Body of pancreas (tissue), 4 donors: ENCODE measurements at regions of chr12 and their contacts with region 1.

Region 1: DNA sequence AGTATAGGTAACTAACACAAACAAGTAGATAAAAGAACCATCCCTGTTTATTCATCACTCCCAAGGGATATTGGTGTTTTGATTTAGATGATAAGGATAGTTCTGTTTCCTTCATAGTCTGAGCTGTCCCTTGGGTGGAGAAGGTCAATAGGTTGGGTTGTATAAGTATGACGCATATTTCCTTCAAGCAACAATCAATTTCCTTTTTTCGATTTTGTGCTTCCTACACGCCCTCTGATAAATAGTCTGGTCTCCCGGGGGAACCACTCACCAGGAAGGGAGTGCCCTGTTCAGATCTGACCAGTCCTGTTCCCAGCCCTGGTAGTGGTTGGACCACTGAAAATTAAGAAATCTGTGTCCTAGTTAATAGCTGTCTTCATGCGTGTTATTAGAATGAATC is 378.7 kb upstream of the FAR2 start:
- DNase-seq: no peak
- ATAC-seq: no peak
- H3K4me3 ChIP-seq: no peak overlapping the region
- H3K27ac ChIP-seq: no peak overlapping the region
- H3K4me1 ChIP-seq: no peaks in the 10 kb centered on the region
- H3K27me3 ChIP-seq: no peaks in the 10 kb centered on the region
- CTCF ChIP-seq: no peak
- POLR2A ChIP-seq: no peak

Region 2: DNA sequence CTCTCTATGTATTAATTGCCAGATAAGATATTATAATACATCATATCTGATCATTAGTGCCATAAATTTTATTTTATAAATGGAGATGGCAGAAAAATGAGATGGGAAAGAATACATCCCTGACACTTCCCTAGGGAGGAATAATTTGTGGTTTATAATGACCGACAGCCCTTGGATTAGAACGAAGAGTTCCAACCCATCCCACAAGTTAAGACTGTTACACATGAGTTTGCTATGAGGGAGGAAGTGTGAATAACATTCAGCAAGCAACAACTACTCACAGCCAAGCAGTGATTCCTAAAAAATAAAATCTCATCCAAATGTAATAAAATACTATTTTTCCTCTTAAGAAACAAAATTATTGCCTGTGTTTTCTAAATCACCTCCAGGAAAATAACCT is 281.1 kb before region 1 on chr12:
- intact Hi-C with region 1: no loop called
- DNase-seq: no peak
- ATAC-seq: no peak
- H3K4me3 ChIP-seq: no peak overlapping the region
- H3K27ac ChIP-seq: no peak overlapping the region
- H3K4me1 ChIP-seq: no peaks in the 10 kb centered on the region
- H3K27me3 ChIP-seq: no peaks in the 10 kb centered on the region
- CTCF ChIP-seq: no peak
- POLR2A ChIP-seq: no peak

Region 3: DNA sequence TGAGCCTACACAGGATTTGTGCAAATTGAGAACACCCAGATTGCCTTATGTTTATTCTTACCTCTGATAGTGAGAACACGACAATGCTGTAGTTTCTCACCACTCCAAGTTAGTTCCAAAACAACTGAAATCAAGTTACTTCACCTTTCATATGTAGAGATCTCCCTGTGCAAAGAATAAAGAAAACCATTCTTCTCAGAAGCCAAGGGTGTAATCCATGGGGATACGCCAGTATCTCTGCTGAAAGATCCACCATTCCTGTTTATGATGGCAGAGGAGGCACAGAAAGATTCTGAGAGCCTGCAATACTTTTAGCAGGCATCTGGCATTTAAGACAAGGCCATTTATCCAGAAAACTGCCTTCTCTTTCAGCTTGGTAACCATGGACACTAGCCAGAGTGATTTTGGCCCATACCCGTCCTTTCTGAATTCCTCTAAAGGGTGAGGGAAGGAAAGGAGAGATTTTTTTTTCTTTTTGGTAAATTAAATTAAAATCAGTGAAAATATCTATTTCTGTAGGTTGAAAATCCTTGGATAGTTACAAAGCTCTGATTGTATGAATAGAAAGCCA is 23.3 kb after region 1 on chr12:
- intact Hi-C with region 1: loop called (anchors 2 kb)
- DNase-seq: no peak
- ATAC-seq: no peak
- H3K4me3 ChIP-seq: no peak overlapping the region
- H3K27ac ChIP-seq: no peak overlapping the region
- H3K4me1 ChIP-seq: no peaks in the 10 kb centered on the region
- H3K27me3 ChIP-seq: no peaks in the 10 kb centered on the region
- CTCF ChIP-seq: no peak
- POLR2A ChIP-seq: no peak

Region 4: GRCh38 chr12:28830491-28830890 is 60.2 kb after region 1 on chr12:
- intact Hi-C with region 1: no loop called
- DNase-seq: no peak
- ATAC-seq: no peak
- H3K4me3 ChIP-seq: no peak overlapping the region
- H3K27ac ChIP-seq: no peak overlapping the region
- H3K4me1 ChIP-seq: no peaks in the 10 kb centered on the region
- H3K27me3 ChIP-seq: no peaks in the 10 kb centered on the region
- CTCF ChIP-seq: no peak
- POLR2A ChIP-seq: no peak

Region 5: DNA sequence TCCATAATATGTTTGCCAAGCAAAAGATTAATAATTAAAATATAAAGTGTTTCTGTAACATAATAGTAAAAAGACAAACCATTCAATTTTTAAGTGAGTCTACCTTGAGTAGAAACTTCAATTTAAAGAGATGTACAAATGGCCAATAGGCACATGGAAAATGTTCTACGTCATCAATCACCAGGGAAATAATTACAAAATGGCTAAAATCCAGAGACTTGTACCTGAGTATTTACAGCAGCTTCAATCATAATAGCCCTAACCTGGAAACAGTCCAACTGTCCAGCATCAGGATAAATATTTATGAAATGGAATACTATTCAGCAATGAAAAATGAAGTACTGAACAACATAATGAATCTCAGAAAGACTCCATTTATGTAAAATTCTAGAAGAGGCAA is 283.2 kb after region 1 on chr12:
- intact Hi-C with region 1: no loop called
- DNase-seq: no peak
- ATAC-seq: no peak
- H3K4me3 ChIP-seq: no peak overlapping the region
- H3K27ac ChIP-seq: no peak overlapping the region
- H3K4me1 ChIP-seq: no peaks in the 10 kb centered on the region
- H3K27me3 ChIP-seq: no peaks in the 10 kb centered on the region
- CTCF ChIP-seq: no peak
- POLR2A ChIP-seq: no peak